HepG2 (cell line): ENCODE measurements at regions of chr22 and their contacts with region 1.

Region 1: DNA sequence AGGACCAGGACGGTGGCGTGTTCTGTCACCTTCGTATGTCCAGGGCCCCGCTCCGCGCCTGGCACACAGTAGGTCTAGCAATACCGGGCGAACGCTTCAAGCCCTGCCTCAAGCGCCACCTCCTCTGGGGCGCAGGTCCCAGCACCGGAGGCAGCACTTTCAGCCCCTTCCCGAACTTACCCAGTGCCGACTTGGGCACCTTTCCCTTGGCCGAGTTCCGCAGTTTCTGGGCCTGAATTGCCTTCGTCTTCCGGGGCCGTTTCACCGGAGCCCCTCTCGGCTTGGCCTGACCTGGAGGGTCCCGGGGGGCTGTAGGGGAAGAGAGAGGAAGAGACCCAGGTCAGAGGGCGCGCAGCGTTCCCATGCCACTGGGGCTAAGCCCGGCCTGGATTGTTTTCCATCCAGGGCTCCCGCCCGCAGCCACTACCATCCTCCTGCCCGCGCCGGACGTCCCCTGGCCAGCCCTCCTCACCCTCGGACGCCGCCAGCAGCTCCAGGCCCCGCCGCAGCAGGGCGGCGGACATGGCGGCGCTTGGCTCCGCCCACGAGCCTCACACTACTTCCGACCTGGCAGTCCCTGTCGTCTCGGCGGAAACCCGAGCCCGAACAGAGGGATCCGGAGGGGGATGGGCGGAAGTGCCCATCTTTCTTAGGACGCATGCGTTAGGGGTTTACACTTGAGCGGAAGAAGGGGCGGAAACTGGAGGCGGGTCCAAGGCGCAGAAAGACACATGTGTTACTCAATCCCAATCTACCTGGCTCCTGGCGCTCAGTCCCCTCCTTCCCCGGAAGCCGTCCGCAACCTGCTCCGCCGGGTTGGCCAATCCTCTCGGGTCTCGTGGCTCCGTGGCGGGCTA is at the start of gene RPS19BP1:
- DNase-seq: peak; percentile 99
- ATAC-seq: peak; percentile 60
- H3K4me3 ChIP-seq: peak within 1 kb of the TSS; percentile 80 to 97 (median 96)
- H3K27ac ChIP-seq: peak within 1 kb of the TSS; percentile 76
- H3K4me1 ChIP-seq: peaks cover 68% of the 10 kb centered on the region
- H3K27me3 ChIP-seq: peaks cover 0 to 14% of the 10 kb centered on the region in 2 experiments; a peak in 3 of 5 replicates
- CTCF ChIP-seq: peak; percentile 3; the same call in 1 of the 2 replicates
- EP300 ChIP-seq: peak in 1 of 2 experiments; percentile 49; a peak in 1 of 4 replicates
- POLR2A ChIP-seq: peak; percentile 85 to 91
- RAD21 ChIP-seq: no peak; the same call in 1 of the 2 replicates
- total RNA-seq, gene RPS19BP1: 81.3 and 88.2 TPM in 2 replicates

Region 2: GRCh38 chr22:39343259-39344048 is 189.0 kb before region 1 on chr22:
- CTCF ChIA-PET with region 1: no interaction called
- POLR2A ChIA-PET with region 1: no interaction called
- in situ Hi-C with region 1: no loop called
- intact Hi-C with region 1: no loop called
- DNase-seq: peak; percentile 70
- ATAC-seq: peak; percentile 97
- H3K4me3 ChIP-seq: no peak overlapping the region
- H3K27ac ChIP-seq: no peak overlapping the region
- H3K4me1 ChIP-seq: peaks cover 9% of the 10 kb centered on the region
- H3K27me3 ChIP-seq: no peaks in the 10 kb centered on the region
- CTCF ChIP-seq: peak; percentile 83
- EP300 ChIP-seq: no peak
- POLR2A ChIP-seq: no peak
- RAD21 ChIP-seq: peak; percentile 29; the same call in 1 of the 2 replicates

Region 3: GRCh38 chr22:39490135-39490798 is 42.2 kb before region 1 on chr22:
- CTCF ChIA-PET with region 1: interaction called, 24 read pairs
- POLR2A ChIA-PET with region 1: interaction called, 4 read pairs
- in situ Hi-C with region 1: no loop called
- intact Hi-C with region 1: loop called (anchors 1 kb)
- DNase-seq: peak; percentile 62
- ATAC-seq: peak; percentile 89
- H3K4me3 ChIP-seq: peak overlapping the region in 1 of 3 experiments; percentile 9; a peak in 1 of 6 replicates
- H3K27ac ChIP-seq: no peak overlapping the region
- H3K4me1 ChIP-seq: peaks cover 21% of the 10 kb centered on the region
- H3K27me3 ChIP-seq: peaks cover 0 to 2% of the 10 kb centered on the region in 2 experiments; a peak in 1 of 5 replicates
- CTCF ChIP-seq: no peak
- EP300 ChIP-seq: no peak
- POLR2A ChIP-seq: no peak
- RAD21 ChIP-seq: no peak

Region 4: GRCh38 chr22:39502109-39502788 is 30.2 kb before region 1 on chr22 and contains the start of gene MIEF1:
- CTCF ChIA-PET with region 1: interaction called, 24 read pairs
- POLR2A ChIA-PET with region 1: interaction called, 167 read pairs
- in situ Hi-C with region 1: no loop called
- intact Hi-C with region 1: no loop called
- DNase-seq: peak; percentile 96
- ATAC-seq: peak; percentile 95
- H3K4me3 ChIP-seq: peak within 1 kb of the TSS; percentile 80 to 93 (median 91)
- H3K27ac ChIP-seq: peak within 1 kb of the TSS; percentile 94
- H3K4me1 ChIP-seq: peaks cover 64% of the 10 kb centered on the region
- H3K27me3 ChIP-seq: no peaks in the 10 kb centered on the region
- CTCF ChIP-seq: no peak; the same call in 1 of the 2 replicates
- EP300 ChIP-seq: no peak
- POLR2A ChIP-seq: peak; percentile 71 to 85
- RAD21 ChIP-seq: no peak
- total RNA-seq, gene MIEF1: 34.8 and 41.4 TPM in 2 replicates

Region 5: GRCh38 chr22:39556970-39557841 is 24.8 kb after region 1 on chr22:
- CTCF ChIA-PET with region 1: no interaction called
- POLR2A ChIA-PET with region 1: no interaction called
- in situ Hi-C with region 1: no loop called
- intact Hi-C with region 1: no loop called
- DNase-seq: no peak
- ATAC-seq: no peak
- H3K4me3 ChIP-seq: no peak overlapping the region
- H3K27ac ChIP-seq: no peak overlapping the region
- H3K4me1 ChIP-seq: no peaks in the 10 kb centered on the region
- H3K27me3 ChIP-seq: peaks cover 9 to 39% of the 10 kb centered on the region in 2 experiments; a peak in 4 of 5 replicates
- CTCF ChIP-seq: 0 out of 2 replicates have a peak, but pooled peaks have one; percentile 19
- EP300 ChIP-seq: no peak
- POLR2A ChIP-seq: no peak
- RAD21 ChIP-seq: no peak

Region 6: GRCh38 chr22:39592134-39593065 is 60.0 kb after region 1 on chr22:
- CTCF ChIA-PET with region 1: no interaction called
- POLR2A ChIA-PET with region 1: no interaction called
- in situ Hi-C with region 1: no loop called
- intact Hi-C with region 1: no loop called
- DNase-seq: no peak
- ATAC-seq: no peak; the same call in 1 of the 3 replicates
- H3K4me3 ChIP-seq: no peak overlapping the region
- H3K27ac ChIP-seq: no peak overlapping the region
- H3K4me1 ChIP-seq: no peaks in the 10 kb centered on the region
- H3K27me3 ChIP-seq: peaks cover 4 to 50% of the 10 kb centered on the region in 2 experiments
- CTCF ChIP-seq: no peak
- EP300 ChIP-seq: no peak
- POLR2A ChIP-seq: no peak
- RAD21 ChIP-seq: no peak

Region 7: DNA sequence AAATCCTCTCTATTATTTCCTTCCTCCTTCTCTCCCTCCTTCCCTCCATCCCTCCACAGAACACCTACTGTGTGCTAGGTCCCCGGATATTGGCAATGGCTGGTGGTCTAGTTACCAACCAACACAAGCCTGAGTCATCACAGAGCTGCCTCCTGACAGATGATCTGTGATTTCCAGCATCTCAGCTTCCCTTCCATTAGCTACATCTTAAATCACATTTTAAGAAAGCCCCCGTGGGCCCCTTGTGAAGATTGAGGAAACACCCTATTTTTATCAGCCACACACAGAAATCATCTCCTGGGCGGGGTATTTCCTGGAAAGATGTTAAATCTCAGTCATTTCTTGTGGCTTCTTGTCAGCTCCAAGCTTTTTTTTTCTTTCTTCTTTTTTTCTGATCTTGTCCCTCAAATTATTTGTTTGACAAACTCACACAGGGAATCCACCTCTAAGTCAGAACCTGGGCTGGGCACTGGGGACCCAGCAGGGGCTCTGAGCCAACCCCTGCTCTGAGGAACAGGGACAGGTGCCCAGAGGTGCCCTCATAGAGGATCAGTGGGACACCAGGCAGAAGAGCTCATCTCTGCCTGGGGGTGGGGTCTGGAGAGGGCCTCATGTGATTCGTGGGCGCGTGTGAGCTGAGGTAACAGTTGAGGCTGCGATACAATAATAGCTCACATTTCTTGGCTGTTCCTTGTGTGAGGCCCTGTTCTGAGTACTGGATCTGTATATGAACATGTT is 80.5 kb after region 1 on chr22:
- CTCF ChIA-PET with region 1: no interaction called
- POLR2A ChIA-PET with region 1: no interaction called
- in situ Hi-C with region 1: no loop called
- intact Hi-C with region 1: no loop called
- DNase-seq: no peak
- ATAC-seq: no peak
- H3K4me3 ChIP-seq: no peak overlapping the region
- H3K27ac ChIP-seq: no peak overlapping the region
- H3K4me1 ChIP-seq: no peaks in the 10 kb centered on the region
- H3K27me3 ChIP-seq: peaks cover 0 to 29% of the 10 kb centered on the region in 2 experiments; a peak in 3 of 5 replicates
- CTCF ChIP-seq: no peak
- EP300 ChIP-seq: no peak
- POLR2A ChIP-seq: no peak
- RAD21 ChIP-seq: no peak

Region 8: DNA sequence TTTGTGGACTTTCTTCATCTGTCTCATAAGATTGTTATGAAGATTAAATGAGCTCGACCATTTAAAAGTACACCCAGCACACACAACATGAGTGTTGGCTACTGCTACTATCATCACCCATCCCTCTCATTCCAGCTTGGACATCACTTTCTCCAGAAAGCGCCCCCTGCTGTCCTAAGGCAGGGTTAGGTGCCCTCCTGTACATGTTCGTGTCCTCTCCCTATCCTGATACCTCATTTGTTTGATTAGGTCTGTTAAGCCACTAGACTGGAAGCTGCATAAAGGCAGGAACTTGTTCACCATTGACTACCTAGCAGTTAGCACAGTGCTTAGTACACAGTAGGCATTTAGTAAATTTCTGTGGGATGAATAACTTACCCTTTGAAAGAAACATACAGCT is 275.6 kb after region 1 on chr22:
- CTCF ChIA-PET with region 1: interaction called, 13 read pairs
- POLR2A ChIA-PET with region 1: no interaction called
- in situ Hi-C with region 1: loop called (anchors 5 kb)
- intact Hi-C with region 1: no loop called
- DNase-seq: peak; percentile 30
- ATAC-seq: peak; percentile 66
- H3K4me3 ChIP-seq: no peak overlapping the region
- H3K27ac ChIP-seq: no peak overlapping the region
- H3K4me1 ChIP-seq: no peaks in the 10 kb centered on the region
- H3K27me3 ChIP-seq: no peaks in the 10 kb centered on the region; a peak in 1 of 5 replicates
- CTCF ChIP-seq: peak; percentile 56
- EP300 ChIP-seq: no peak
- POLR2A ChIP-seq: no peak
- RAD21 ChIP-seq: no peak; the same call in 1 of the 2 replicates

Region 9: GRCh38 chr22:40036591-40037225 is 504.3 kb after region 1 on chr22:
- CTCF ChIA-PET with region 1: interaction called, 8 read pairs
- POLR2A ChIA-PET with region 1: no interaction called
- in situ Hi-C with region 1: no loop called
- intact Hi-C with region 1: loop called (anchors 2 kb)
- DNase-seq: peak; percentile 64
- ATAC-seq: peak; percentile 94
- H3K4me3 ChIP-seq: no peak overlapping the region
- H3K27ac ChIP-seq: no peak overlapping the region
- H3K4me1 ChIP-seq: peaks cover 14% of the 10 kb centered on the region
- H3K27me3 ChIP-seq: peaks cover 2 to 44% of the 10 kb centered on the region in 2 experiments; a peak in 4 of 5 replicates
- CTCF ChIP-seq: peak; percentile 97
- EP300 ChIP-seq: no peak
- POLR2A ChIP-seq: no peak
- RAD21 ChIP-seq: peak; percentile 91